B cell (primary cell): ENCODE measurements at regions of chr19 and their contacts with region 1.

Region 1: DNA sequence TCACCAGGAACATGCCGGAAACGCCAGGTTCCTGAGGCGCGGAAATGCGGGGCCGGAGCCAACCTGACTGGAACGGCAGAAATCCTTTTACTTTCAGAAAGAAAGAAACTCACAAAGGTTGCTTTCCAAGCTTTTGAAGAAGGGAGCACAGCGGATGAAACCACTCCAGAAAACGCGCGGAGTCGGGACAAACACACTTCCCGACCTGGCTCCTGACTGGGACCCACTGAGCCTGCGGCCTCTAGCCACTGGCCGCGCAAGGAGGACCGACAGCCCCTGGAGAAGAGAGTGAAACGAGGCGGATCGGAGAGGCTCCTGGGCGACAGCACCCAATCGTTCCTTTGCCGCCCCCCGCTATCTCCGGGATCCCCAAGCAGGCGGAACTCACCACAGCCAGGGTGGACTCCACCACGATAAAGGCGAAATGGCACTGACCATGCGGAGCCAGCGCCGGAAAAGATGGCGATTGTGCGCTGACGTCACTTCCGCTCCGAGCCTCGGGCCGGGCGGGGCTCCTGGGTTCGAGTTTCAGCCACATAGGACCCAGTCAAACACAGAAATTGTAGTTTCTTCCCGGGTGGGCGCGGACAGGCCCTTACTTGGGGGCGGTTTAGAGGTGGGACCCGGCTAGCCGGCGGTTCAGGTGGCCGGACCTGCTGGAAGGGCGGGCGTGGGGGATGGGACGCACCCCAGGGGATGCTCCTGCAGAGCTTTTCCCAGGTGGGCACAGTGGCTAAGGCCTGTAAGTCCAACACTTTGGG is at the start of gene ZNF121:
- DNase-seq: peak; percentile 90
- ATAC-seq: peak; percentile 84
- H3K4me3 ChIP-seq: peak within 1 kb of the TSS; percentile 77 to 100 (median 92)
- H3K4me3 Mint-ChIP-seq: peak within 1 kb of the TSS; percentile 94
- H3K27ac ChIP-seq: peak within 1 kb of the TSS; percentile 90 to 96
- H3K27ac Mint-ChIP-seq: peak within 1 kb of the TSS; percentile 95
- H3K4me1 ChIP-seq: peaks cover 0 to 27% of the 10 kb centered on the region in 2 donors
- H3K4me1 Mint-ChIP-seq: peaks cover 31% of the 10 kb centered on the region
- H3K27me3 ChIP-seq: peaks cover 0 to under 1% (median 0%) of the 10 kb centered on the region in 4 experiments
- H3K27me3 Mint-ChIP-seq: peaks cover 4% of the 10 kb centered on the region
- CTCF ChIP-seq: no peak
- total RNA-seq, gene ZNF121: 48.0 and 53.5 TPM in 2 replicates

Region 2: GRCh38 chr19:9205501-9206113 is 378.6 kb before region 1 on chr19:
- CTCF ChIA-PET with region 1: interaction called, 22 read pairs
- POLR2A ChIA-PET with region 1: no interaction called
- intact Hi-C with region 1: loop called (anchors 1 kb)
- DNase-seq: peak; percentile 73
- ATAC-seq: peak; percentile 57
- H3K4me3 ChIP-seq: peak overlapping the region in 4 of 5 experiments; percentile 21 to 42 (median 33)
- H3K4me3 Mint-ChIP-seq: peak overlapping the region; percentile 78
- H3K27ac ChIP-seq: no peak overlapping the region
- H3K27ac Mint-ChIP-seq: no peak overlapping the region
- H3K4me1 ChIP-seq: peaks cover 0 to 4% of the 10 kb centered on the region in 2 donors
- H3K4me1 Mint-ChIP-seq: peaks cover 6% of the 10 kb centered on the region
- H3K27me3 ChIP-seq: no peaks in the 10 kb centered on the region
- H3K27me3 Mint-ChIP-seq: peaks cover 4% of the 10 kb centered on the region
- CTCF ChIP-seq: peak; percentile 97

Region 3: DNA sequence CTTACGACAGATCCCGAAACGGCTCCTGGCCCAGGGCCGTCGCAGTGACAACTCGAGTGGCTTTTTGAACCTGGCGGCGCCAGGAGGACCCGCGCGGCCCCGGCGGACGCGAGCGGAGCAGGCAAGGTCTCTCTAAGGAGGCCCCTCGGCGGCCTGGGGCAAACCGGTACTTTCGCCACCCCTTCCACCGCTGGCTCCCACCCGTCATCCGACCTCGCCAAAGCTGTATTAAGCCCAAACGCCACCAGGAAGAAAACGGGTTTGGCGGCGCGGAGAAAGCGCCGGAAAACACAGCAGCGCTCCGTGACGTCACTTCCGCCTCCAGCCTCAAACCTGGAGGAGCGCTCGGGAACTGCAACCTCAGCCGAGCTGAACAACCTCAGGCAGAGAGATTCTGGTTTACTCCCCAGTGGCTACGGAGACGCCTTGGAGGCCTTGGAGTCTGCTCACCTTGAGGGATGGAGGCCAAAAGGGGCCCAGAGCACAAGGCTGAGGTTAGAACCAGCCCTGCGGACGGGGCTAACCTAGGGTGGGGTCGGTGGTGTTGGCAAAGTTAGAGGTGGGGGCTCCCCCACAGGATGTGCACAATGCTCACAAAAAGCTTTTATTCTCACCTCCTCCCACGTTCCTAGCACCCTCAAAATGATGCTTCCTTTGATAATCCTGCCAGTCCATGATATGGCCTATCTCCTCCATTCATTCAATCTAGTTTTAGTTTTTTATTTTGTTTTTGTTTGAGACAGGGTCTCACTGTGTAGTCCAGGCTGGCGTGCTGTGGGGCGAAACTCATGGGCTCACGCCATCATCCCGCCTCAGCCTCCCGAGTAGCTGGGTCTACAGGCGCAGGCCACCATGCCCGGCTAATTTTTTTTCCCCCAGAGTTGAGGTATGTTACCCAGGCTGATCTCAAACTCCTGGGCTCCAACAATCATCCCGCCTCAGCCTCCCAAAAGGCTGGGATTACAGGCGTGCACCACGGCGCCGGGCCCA is 148.7 kb before region 1 on chr19 and contains the start of gene ZNF266:
- CTCF ChIA-PET with region 1: interaction called, 6 read pairs
- POLR2A ChIA-PET with region 1: interaction called, 4 read pairs
- intact Hi-C with region 1: loop called (anchors 1 kb)
- DNase-seq: peak; percentile 95
- ATAC-seq: peak; percentile 93
- H3K4me3 ChIP-seq: peak within 1 kb of the TSS; percentile 64 to 91 (median 80)
- H3K4me3 Mint-ChIP-seq: peak within 1 kb of the TSS; percentile 95
- H3K27ac ChIP-seq: peak within 1 kb of the TSS; percentile 92 to 93
- H3K27ac Mint-ChIP-seq: peak within 1 kb of the TSS; percentile 98
- H3K4me1 ChIP-seq: peaks cover 16 to 26% of the 10 kb centered on the region in 2 donors
- H3K4me1 Mint-ChIP-seq: peaks cover 35% of the 10 kb centered on the region
- H3K27me3 ChIP-seq: no peaks in the 10 kb centered on the region
- H3K27me3 Mint-ChIP-seq: no peaks in the 10 kb centered on the region
- CTCF ChIP-seq: peak; percentile 77
- total RNA-seq, gene ZNF266: 76.0 and 81.4 TPM in 2 replicates

Region 4: GRCh38 chr19:9621156-9622037 is 37.1 kb after region 1 on chr19 and contains the start of gene ZNF561:
- CTCF ChIA-PET with region 1: interaction called, 4 read pairs
- POLR2A ChIA-PET with region 1: interaction called, 3 read pairs
- intact Hi-C with region 1: loop called (anchors 1 kb)
- DNase-seq: peak; percentile 95
- ATAC-seq: peak; percentile 86
- H3K4me3 ChIP-seq: peak within 1 kb of the TSS; percentile 56 to 91 (median 89)
- H3K4me3 Mint-ChIP-seq: peak within 1 kb of the TSS; percentile 100
- H3K27ac ChIP-seq: peak within 1 kb of the TSS; percentile 83 to 94
- H3K27ac Mint-ChIP-seq: peak within 1 kb of the TSS; percentile 100
- H3K4me1 ChIP-seq: peaks cover 12 to 21% of the 10 kb centered on the region in 2 donors
- H3K4me1 Mint-ChIP-seq: peaks cover 22% of the 10 kb centered on the region
- H3K27me3 ChIP-seq: no peaks in the 10 kb centered on the region
- H3K27me3 Mint-ChIP-seq: peaks cover 2% of the 10 kb centered on the region
- CTCF ChIP-seq: no peak
- total RNA-seq, gene ZNF561: 44.5 and 56.8 TPM in 2 replicates

Region 5: GRCh38 chr19:9768175-9769112 is 184.2 kb after region 1 on chr19 and contains the start of gene ZNF846:
- CTCF ChIA-PET with region 1: interaction called, 3 read pairs
- POLR2A ChIA-PET with region 1: no interaction called
- intact Hi-C with region 1: loop called (anchors 1 kb)
- DNase-seq: peak; percentile 96
- ATAC-seq: peak; percentile 98
- H3K4me3 ChIP-seq: peak within 1 kb of the TSS; percentile 52 to 96 (median 88)
- H3K4me3 Mint-ChIP-seq: peak within 1 kb of the TSS; percentile 96
- H3K27ac ChIP-seq: peak within 1 kb of the TSS; percentile 69 to 94
- H3K27ac Mint-ChIP-seq: peak within 1 kb of the TSS; percentile 98
- H3K4me1 ChIP-seq: peaks cover 0 to 13% of the 10 kb centered on the region in 2 donors
- H3K4me1 Mint-ChIP-seq: peaks cover 15% of the 10 kb centered on the region
- H3K27me3 ChIP-seq: no peaks in the 10 kb centered on the region
- H3K27me3 Mint-ChIP-seq: no peaks in the 10 kb centered on the region
- CTCF ChIP-seq: no peak
- total RNA-seq, gene ZNF846: 18.2 and 24.5 TPM in 2 replicates